MCF 10A (cell line): ENCODE measurements at regions of chr10 and their contacts with region 1.

Region 1: GRCh38 chr10:120942806-120943413 is 91.7 kb downstream of the WDR11 start:
- DNase-seq: peak; percentile 77
- H3K4me3 Mint-ChIP-seq: no peak overlapping the region
- H3K27ac Mint-ChIP-seq: no peak overlapping the region
- H3K4me1 Mint-ChIP-seq: peaks cover 10% of the 10 kb centered on the region
- H3K27me3 Mint-ChIP-seq: no peaks in the 10 kb centered on the region
- CTCF ChIP-seq: peak; percentile 93

Region 2: DNA sequence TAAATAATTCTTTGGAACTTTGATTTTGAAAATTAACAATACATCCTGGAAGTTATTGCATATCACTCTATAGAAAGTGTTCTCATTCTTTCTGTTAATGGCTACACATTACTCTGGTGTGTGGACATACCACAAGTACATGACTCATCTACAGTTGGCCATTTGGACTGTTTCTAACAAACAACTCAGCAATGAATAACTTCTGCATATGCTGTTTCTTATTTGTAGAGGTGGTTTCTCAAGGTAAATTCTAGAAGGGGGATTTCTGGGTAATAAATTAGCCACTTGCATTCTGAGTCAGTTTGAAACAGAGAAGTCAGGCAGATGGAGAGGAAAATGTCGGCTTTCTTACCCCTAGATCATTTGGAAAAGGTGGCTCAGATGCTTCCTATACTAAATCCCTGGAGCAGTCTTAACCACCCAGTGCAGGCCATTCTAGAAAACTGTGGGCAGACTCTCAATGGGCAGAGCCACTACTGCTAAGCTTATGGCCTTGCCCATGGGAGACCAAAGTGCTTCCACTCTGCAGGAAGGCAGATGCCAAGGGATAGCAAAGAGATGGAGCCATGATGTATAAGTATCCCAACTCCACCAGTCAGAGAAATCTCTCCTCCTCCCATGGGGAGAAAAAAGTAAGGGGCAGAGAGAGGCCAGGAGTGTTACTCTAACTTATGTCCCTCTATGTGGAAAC is 679.9 kb before region 1 on chr10:
- CTCF ChIA-PET with region 1: no interaction called
- POLR2A ChIA-PET with region 1: no interaction called
- intact Hi-C with region 1: no loop called
- DNase-seq: peak; percentile 16
- H3K4me3 Mint-ChIP-seq: no peak overlapping the region
- H3K27ac Mint-ChIP-seq: no peak overlapping the region
- H3K4me1 Mint-ChIP-seq: no peaks in the 10 kb centered on the region
- H3K27me3 Mint-ChIP-seq: peaks cover 63% of the 10 kb centered on the region
- CTCF ChIP-seq: no peak

Region 3: GRCh38 chr10:120917521-120918250 is 25.2 kb before region 1 on chr10:
- CTCF ChIA-PET with region 1: no interaction called
- POLR2A ChIA-PET with region 1: no interaction called
- intact Hi-C with region 1: no loop called
- DNase-seq: no peak
- H3K4me3 Mint-ChIP-seq: no peak overlapping the region
- H3K27ac Mint-ChIP-seq: no peak overlapping the region
- H3K4me1 Mint-ChIP-seq: no peaks in the 10 kb centered on the region
- H3K27me3 Mint-ChIP-seq: no peaks in the 10 kb centered on the region
- CTCF ChIP-seq: no peak

Region 4: DNA sequence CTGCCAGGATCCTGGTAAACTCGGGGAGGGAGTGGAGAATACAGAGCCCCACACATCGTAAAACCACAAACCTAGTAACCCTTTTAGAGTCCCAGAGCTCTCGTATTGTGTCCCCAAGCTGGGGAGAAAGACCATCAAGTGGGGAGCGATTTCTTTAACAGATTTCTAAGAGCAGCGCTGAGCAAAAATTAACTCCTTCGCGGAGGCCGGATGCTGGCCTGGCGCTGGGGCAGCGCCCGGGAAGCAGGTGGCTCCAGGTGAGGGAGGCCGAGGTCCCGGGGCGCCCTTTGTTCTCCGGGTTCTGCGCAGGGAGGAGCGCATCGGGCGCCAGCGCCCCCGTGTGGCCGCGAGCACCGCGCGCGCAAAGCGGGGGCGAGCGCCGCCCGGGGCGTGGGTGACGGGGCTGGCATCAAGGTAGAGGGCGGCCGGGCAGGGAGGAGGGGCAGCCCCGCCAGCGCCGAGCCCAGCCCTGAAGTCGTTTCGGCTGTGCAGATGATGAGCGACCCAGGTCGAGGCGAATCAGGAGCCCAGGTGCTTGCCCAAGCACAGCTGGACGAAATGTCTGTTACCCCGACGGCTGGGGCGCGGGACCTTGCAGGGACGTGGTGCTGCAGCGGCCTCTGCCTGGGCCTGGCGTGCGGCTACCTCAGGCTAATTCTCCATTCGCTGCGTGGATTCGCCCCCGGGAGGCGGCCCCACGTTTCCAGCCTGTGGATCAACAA is 665.7 kb after region 1 on chr10:
- CTCF ChIA-PET with region 1: interaction called, 7 read pairs
- POLR2A ChIA-PET with region 1: no interaction called
- intact Hi-C with region 1: loop called (anchors 2 kb)
- DNase-seq: peak; percentile 54
- H3K4me3 Mint-ChIP-seq: peak overlapping the region; percentile 56
- H3K27ac Mint-ChIP-seq: no peak overlapping the region
- H3K4me1 Mint-ChIP-seq: peaks cover 19% of the 10 kb centered on the region
- H3K27me3 Mint-ChIP-seq: no peaks in the 10 kb centered on the region
- CTCF ChIP-seq: peak; percentile 87

Region 5: GRCh38 chr10:121734589-121735045 is 791.7 kb after region 1 on chr10:
- CTCF ChIA-PET with region 1: interaction called, 9 read pairs
- POLR2A ChIA-PET with region 1: no interaction called
- intact Hi-C with region 1: loop called (anchors 1 kb)
- DNase-seq: peak; percentile 57
- H3K4me3 Mint-ChIP-seq: no peak overlapping the region
- H3K27ac Mint-ChIP-seq: no peak overlapping the region
- H3K4me1 Mint-ChIP-seq: no peaks in the 10 kb centered on the region
- H3K27me3 Mint-ChIP-seq: no peaks in the 10 kb centered on the region
- CTCF ChIP-seq: peak; percentile 57

Region 6: GRCh38 chr10:121741248-121741792 is 798.4 kb after region 1 on chr10:
- CTCF ChIA-PET with region 1: interaction called, 10 read pairs
- POLR2A ChIA-PET with region 1: no interaction called
- intact Hi-C with region 1: no loop called
- DNase-seq: no peak
- H3K4me3 Mint-ChIP-seq: no peak overlapping the region
- H3K27ac Mint-ChIP-seq: no peak overlapping the region
- H3K4me1 Mint-ChIP-seq: no peaks in the 10 kb centered on the region
- H3K27me3 Mint-ChIP-seq: no peaks in the 10 kb centered on the region
- CTCF ChIP-seq: no peak

Region 7: DNA sequence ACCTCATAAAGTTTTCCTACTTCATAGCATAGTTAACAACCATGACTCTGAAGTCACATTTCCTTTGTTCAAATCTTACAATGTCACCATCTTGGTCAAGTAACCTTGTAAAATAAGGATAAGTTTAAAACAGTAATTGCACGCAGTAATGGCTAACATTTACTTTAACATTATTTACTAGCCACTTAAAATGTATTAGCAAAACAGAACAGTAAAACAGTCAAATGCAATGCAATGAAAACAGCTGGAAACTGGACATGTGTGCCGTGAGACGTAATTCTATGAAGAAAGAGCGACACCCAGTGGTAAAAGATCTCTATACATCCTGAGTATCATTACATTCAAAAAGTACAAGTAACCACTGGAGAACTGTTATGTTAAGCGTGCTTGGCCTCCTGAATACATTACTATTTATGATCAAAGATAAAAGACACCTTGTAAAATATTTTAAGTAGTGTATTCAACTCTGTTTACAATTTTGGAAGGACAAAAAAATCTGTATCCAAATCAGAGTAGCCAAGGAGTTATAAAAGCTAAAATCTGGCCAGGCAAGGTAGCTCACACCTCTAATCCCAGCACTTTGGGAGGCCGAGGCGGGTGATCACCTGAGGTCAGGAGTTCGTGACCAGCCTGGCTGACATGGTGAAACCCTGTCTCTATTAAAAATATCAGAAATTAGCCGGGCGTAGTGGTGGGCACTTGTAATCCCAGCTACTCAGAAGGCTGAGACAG is 957.7 kb after region 1 on chr10:
- CTCF ChIA-PET with region 1: interaction called, 12 read pairs
- POLR2A ChIA-PET with region 1: no interaction called
- intact Hi-C with region 1: loop called (anchors 1 kb)
- DNase-seq: peak; percentile 69
- H3K4me3 Mint-ChIP-seq: no peak overlapping the region
- H3K27ac Mint-ChIP-seq: no peak overlapping the region
- H3K4me1 Mint-ChIP-seq: no peaks in the 10 kb centered on the region
- H3K27me3 Mint-ChIP-seq: no peaks in the 10 kb centered on the region
- CTCF ChIP-seq: peak; percentile 52